ENCODE measurements at regions of chr4 and their contacts with region 1.

Region 1: GRCh38 chr4:55184600-55185523 is 59.5 kb upstream of the KDR start:
- DNase-seq: peak; percentile 70
- H3K4me3 Mint-ChIP-seq: peak overlapping the region; percentile 30
- H3K27ac Mint-ChIP-seq: peak overlapping the region; percentile 82
- H3K4me1 Mint-ChIP-seq: peaks cover 45% of the 10 kb centered on the region
- H3K27me3 Mint-ChIP-seq: no peaks in the 10 kb centered on the region
- CTCF ChIP-seq: peak; percentile 44

Region 2: DNA sequence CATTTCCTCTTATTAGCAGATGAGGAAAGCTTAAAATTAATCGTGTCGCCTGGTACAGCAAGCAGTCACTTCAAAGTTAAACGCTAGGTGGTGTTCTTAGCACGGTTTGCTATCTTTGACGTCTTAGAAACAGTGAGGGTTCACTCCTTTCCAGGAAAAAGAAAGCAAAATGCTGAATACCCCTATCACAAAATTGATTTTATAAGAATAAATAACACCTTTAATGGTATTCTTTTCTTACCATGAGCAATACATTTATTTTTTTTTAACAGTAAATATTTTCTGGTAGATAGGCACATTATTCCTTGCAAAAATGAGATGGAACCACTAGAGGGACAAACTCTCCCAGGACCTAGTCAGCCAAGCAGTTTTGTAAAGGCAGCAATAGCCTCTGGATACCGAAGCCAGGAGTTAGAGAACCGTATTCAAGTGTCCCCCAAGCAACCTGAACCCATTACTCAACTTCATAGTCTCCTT is 213.3 kb before region 1 on chr4:
- CTCF ChIA-PET with region 1: interaction called, 9 read pairs
- intact Hi-C with region 1: loop called (anchors 10 kb)
- DNase-seq: peak; percentile 15
- H3K4me3 Mint-ChIP-seq: no peak overlapping the region
- H3K27ac Mint-ChIP-seq: no peak overlapping the region
- H3K4me1 Mint-ChIP-seq: peaks cover 8% of the 10 kb centered on the region
- H3K27me3 Mint-ChIP-seq: no peaks in the 10 kb centered on the region
- CTCF ChIP-seq: peak; percentile 69

Region 3: GRCh38 chr4:55012363-55013230 is 172.3 kb before region 1 on chr4:
- CTCF ChIA-PET with region 1: interaction called, 3 read pairs
- intact Hi-C with region 1: loop called (anchors 10 kb)
- DNase-seq: no peak
- H3K4me3 Mint-ChIP-seq: peak overlapping the region; percentile 38
- H3K27ac Mint-ChIP-seq: no peak overlapping the region
- H3K4me1 Mint-ChIP-seq: peaks cover 17% of the 10 kb centered on the region
- H3K27me3 Mint-ChIP-seq: no peaks in the 10 kb centered on the region
- CTCF ChIP-seq: no peak

Region 4: GRCh38 chr4:55125087-55125721 is 59.7 kb before region 1 on chr4 and contains the start of gene KDR:
- CTCF ChIA-PET with region 1: no interaction called
- intact Hi-C with region 1: no loop called
- DNase-seq: peak; percentile 17
- H3K4me3 Mint-ChIP-seq: peak within 1 kb of the TSS; percentile 57
- H3K27ac Mint-ChIP-seq: no peak within 1 kb of the TSS
- H3K4me1 Mint-ChIP-seq: no peaks in the 10 kb centered on the region
- H3K27me3 Mint-ChIP-seq: no peaks in the 10 kb centered on the region
- CTCF ChIP-seq: no peak
- total RNA-seq, gene KDR: 0.09 TPM in 1 of 2 replicates, not detected in the other

Region 5: GRCh38 chr4:55169352-55169961 is 15.4 kb before region 1 on chr4:
- CTCF ChIA-PET with region 1: interaction called, 11 read pairs
- intact Hi-C with region 1: no loop called
- DNase-seq: peak; percentile 48
- H3K4me3 Mint-ChIP-seq: peak overlapping the region; percentile 14
- H3K27ac Mint-ChIP-seq: no peak overlapping the region
- H3K4me1 Mint-ChIP-seq: peaks cover 30% of the 10 kb centered on the region
- H3K27me3 Mint-ChIP-seq: no peaks in the 10 kb centered on the region
- CTCF ChIP-seq: no peak

Region 6: DNA sequence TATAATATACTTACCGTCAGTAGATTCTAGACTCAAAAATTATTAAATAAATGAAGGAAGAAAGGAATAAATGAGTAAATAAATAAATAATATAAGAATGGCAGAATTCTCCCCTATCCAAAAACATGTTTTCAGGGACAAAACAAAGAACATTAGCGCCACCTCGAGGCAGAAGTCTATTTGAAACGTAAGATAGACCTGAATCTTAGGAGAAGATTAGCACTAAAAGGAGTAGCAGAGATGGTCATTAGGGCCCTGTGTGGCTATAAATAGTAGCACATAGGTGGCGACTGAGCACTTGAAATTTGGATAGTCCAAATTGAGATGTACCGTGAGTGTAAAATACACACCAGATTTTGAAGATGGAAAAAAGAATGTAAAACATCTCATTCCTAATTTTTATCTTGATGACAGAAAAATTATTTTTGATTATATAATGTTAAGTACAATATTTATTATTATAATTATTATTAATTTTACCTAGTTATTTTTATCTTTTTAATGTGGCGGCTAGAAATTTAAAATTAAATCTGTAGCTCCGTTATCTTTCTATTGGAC is 136.9 kb after region 1 on chr4:
- CTCF ChIA-PET with region 1: interaction called, 13 read pairs
- intact Hi-C with region 1: loop called (anchors 2 kb)
- DNase-seq: peak; percentile 74
- H3K4me3 Mint-ChIP-seq: no peak overlapping the region
- H3K27ac Mint-ChIP-seq: no peak overlapping the region
- H3K4me1 Mint-ChIP-seq: peaks cover 34% of the 10 kb centered on the region
- H3K27me3 Mint-ChIP-seq: no peaks in the 10 kb centered on the region
- CTCF ChIP-seq: peak; percentile 42

Region 7: DNA sequence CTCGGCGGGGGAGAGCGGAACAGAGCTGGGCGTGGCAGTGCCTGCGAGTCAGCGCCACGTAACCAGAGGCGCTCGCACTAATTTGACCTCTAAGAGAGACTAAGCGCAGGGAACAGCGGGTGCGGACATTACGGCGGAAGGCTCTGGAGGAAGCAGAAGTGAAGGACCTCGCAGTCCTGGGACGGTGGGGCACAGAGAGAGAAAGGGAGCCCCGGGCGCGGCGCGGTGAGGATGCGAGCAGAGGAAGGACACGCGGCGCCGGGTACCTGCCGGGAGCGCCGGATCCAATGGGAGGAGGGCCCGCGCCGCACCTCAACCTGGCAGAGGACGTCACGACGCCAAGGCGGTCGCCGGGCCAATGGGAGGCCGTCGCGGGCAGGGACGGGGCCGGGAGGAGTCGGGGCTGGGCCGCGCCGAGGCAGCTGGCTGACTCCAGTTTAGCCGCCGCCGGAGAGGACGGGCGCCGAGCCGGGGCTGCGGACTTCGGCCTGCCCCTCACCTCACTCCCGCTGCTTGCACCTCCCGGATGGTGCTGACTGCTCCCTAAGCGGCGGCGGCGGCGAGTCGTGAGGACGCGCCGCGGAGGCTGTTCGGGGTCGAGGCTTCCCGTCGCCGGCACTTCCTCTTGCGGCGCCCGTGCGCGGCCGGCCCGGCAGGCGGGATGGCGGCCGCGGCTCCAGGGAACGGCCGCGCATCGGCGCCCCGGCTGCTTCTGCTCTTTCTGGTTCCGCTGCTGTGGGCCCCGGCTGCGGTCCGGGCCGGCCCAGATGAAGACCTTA is 210.9 kb after region 1 on chr4 and contains the start of gene TMEM165:
- CTCF ChIA-PET with region 1: no interaction called
- intact Hi-C with region 1: loop called (anchors 5 kb)
- DNase-seq: peak; percentile 93
- H3K4me3 Mint-ChIP-seq: peak within 1 kb of the TSS; percentile 81
- H3K27ac Mint-ChIP-seq: peak within 1 kb of the TSS; percentile 87
- H3K4me1 Mint-ChIP-seq: peaks cover 23% of the 10 kb centered on the region
- H3K27me3 Mint-ChIP-seq: no peaks in the 10 kb centered on the region
- CTCF ChIP-seq: no peak
- total RNA-seq, gene TMEM165: 89.0 and 96.6 TPM in 2 replicates

Region 8: GRCh38 chr4:55754754-55755350 is 570.0 kb after region 1 on chr4:
- CTCF ChIA-PET with region 1: no interaction called
- intact Hi-C with region 1: no loop called
- DNase-seq: peak; percentile 4
- H3K4me3 Mint-ChIP-seq: no peak overlapping the region
- H3K27ac Mint-ChIP-seq: no peak overlapping the region
- H3K4me1 Mint-ChIP-seq: peaks cover 14% of the 10 kb centered on the region
- H3K27me3 Mint-ChIP-seq: no peaks in the 10 kb centered on the region
- CTCF ChIP-seq: no peak